ENCODE measurements at regions of chr11 and their contacts with region 1.

Region 1: GRCh38 chr11:111601979-111602864 is at the start of gene SIK2:
- DNase-seq: peak; percentile 97 to 98 (median 98)
- ATAC-seq: peak; percentile 97 to 98
- H3K4me3 ChIP-seq: peak within 1 kb of the TSS; percentile 91
- H3K27ac ChIP-seq: peak within 1 kb of the TSS; percentile 86
- H3K4me1 ChIP-seq: no peaks in the 10 kb centered on the region
- H3K27me3 ChIP-seq: no peaks in the 10 kb centered on the region
- total RNA-seq, gene SIK2: 18.0 to 51.7 (median 21.9) TPM

Region 2: DNA sequence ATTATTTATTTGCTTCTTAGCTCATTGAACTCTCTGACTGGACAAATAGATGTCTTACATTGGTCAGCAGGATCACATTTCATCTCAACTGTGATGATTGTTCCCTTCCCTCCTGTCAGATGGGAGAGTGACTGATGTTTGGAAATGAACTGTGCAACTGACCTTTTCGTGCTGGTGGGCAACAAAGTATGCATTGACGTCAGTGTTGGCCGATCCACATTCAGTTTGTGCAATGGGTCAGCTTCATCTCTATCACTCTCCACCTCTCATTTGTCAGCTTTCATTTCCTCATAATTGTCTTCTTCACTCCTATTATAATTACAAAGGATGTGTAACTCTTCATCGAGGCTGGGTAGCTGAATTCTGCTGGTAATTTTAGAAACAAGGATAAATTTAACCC is 92.6 kb after region 1 on chr11:
- intact Hi-C with region 1: loop called in 1 of 4 experiments (anchors 10 kb)
- DNase-seq: peak in 1 of 3 donors; percentile 48
- ATAC-seq: peak; percentile 34 to 89
- H3K4me3 ChIP-seq: no peak overlapping the region
- H3K27ac ChIP-seq: no peak overlapping the region
- H3K4me1 ChIP-seq: peaks cover 10% of the 10 kb centered on the region
- H3K27me3 ChIP-seq: no peaks in the 10 kb centered on the region